Posterior vena cava (tissue), 2 donors: ENCODE measurements at regions of chr17 and their contacts with region 1.

Region 1: DNA sequence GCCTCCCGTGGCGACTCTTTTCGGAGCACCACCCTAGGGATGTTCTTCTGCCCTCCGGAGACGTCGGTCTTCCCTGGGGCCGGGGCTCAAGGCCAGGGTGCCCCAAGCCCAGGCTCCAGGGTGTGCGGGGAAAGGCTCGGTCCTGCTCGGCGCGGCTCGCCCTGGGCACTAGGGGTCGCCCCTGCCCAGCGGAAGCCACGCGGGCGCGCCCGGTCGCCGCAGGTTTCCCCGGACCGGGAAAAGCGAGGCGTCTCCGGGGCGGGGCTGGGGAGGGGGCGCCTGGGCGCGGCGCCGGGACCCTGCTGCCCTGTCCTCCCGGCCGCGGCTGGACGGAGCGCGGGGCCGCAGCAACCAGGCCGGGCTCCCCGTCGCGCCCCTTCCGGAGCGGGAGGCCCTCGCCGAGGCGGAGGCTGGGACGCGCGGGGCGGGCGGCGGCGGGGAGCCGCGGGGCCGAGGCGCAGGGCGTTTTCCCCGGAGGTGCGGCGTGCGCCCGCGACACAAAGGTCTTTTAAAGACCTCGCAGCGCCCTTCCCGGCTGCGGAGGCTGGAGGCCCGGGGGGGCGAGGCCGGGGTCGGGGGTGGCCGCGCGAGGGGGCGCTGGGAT is 76.4 kb downstream of the MRC2 start:
- DNase-seq: peak; percentile 94

Region 2: GRCh38 chr17:62968445-62968923 is 264.6 kb after region 1 on chr17:
- intact Hi-C with region 1: loop called (anchors 5 kb)
- DNase-seq: no peak

Region 3: GRCh38 chr17:63412234-63412633 is 708.4 kb after region 1 on chr17:
- intact Hi-C with region 1: loop called in 1 of 2 experiments (anchors 5 kb)
- DNase-seq: no peak